Caco-2 (cell line): ENCODE measurements at regions of chr10 and their contacts with region 1.

Region 1: DNA sequence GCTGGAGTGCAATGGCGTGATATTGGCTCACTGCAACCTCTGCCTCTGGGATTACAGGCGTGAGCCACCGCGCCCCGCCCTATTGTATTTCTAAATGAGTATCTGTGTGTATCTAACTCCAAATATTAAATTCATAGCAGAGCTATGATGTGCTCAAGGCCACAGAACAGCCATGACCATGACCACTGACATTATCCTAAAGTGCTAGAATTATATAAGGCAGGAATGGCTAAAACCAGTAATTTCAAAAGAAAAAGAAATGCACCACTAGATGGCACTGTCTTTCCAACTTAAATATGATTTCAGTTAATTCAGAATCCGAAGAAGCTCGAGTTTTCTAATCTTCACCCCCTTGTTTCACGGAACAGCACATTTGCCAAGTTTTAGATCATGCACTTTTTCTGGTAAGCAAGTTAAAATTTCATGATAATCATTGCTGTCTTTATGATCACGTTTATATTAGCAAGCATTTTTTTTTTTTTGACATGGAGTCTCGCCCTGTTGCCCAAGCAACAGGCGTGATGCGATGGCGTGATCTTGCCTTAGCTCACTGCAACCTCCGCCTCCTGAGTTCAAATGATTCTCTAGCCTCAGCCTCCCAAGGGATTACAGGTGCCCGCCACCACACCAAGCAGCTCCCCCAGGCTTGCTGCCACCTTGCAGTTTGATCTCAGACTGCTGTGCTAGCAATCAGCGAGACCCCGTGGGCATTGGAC is 65.3 kb downstream of the OR13A1 start:
- DNase-seq: peak in 1 of 2 experiments; percentile 67
- H3K4me3 ChIP-seq: no peak overlapping the region
- H3K4me3 Mint-ChIP-seq: peak overlapping the region; percentile 48
- H3K27ac Mint-ChIP-seq: no peak overlapping the region
- H3K4me1 ChIP-seq: no peaks in the 10 kb centered on the region
- H3K4me1 Mint-ChIP-seq: no peaks in the 10 kb centered on the region
- H3K27me3 ChIP-seq: no peaks in the 10 kb centered on the region
- H3K27me3 Mint-ChIP-seq: peaks cover 25% of the 10 kb centered on the region
- CTCF ChIP-seq: peak; percentile 67 to 87

Region 2: GRCh38 chr10:44801383-44802327 is 448.5 kb before region 1 on chr10:
- CTCF ChIA-PET with region 1: no interaction called
- POLR2A ChIA-PET with region 1: no interaction called
- intact Hi-C with region 1: no loop called
- DNase-seq: no peak
- H3K4me3 ChIP-seq: no peak overlapping the region
- H3K4me3 Mint-ChIP-seq: no peak overlapping the region
- H3K27ac Mint-ChIP-seq: no peak overlapping the region
- H3K4me1 ChIP-seq: no peaks in the 10 kb centered on the region
- H3K4me1 Mint-ChIP-seq: no peaks in the 10 kb centered on the region
- H3K27me3 ChIP-seq: no peaks in the 10 kb centered on the region
- H3K27me3 Mint-ChIP-seq: peaks cover 31% of the 10 kb centered on the region
- CTCF ChIP-seq: no peak

Region 3: DNA sequence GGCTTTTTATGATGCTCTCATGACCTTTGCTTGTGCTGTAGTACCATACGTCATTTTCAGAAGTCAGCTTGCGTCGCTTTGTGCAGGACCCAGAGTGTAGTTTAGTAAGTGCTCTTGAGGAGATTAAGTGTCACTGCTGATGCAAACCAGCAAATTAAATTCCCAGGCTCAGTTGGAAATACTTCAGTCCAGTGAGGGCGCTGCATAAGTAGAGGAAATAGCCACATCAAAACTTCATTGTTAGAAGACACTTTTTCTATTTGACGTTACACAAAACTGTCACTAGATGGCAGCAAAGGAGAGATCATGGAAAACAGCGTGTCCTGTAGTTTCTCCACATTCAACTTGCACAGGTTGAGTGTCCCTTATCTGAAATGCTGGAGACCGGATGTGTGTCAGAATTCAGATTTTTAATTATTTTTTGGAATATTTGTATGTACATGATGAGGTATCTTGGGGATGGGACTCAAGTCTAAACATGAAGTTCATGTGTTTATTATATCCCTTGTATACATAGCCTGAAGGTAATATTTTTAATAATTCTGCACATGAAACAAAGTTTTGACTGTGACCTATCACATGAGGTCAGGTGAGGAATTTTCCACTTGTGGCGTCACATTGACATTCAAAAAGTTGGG is 241.5 kb before region 1 on chr10:
- CTCF ChIA-PET with region 1: interaction called, 5 read pairs
- POLR2A ChIA-PET with region 1: no interaction called
- intact Hi-C with region 1: loop called (anchors 2 kb)
- DNase-seq: peak in 1 of 2 experiments; percentile 83
- H3K4me3 ChIP-seq: no peak overlapping the region
- H3K4me3 Mint-ChIP-seq: no peak overlapping the region
- H3K27ac Mint-ChIP-seq: no peak overlapping the region
- H3K4me1 ChIP-seq: peaks cover 5% of the 10 kb centered on the region; the same call in 1 of the 2 replicates
- H3K4me1 Mint-ChIP-seq: peaks cover 2% of the 10 kb centered on the region
- H3K27me3 ChIP-seq: no peaks in the 10 kb centered on the region
- H3K27me3 Mint-ChIP-seq: no peaks in the 10 kb centered on the region
- CTCF ChIP-seq: peak; percentile 87 to 90

Region 4: GRCh38 chr10:45235798-45236231 is 14.3 kb before region 1 on chr10:
- CTCF ChIA-PET with region 1: interaction called, 6 read pairs
- POLR2A ChIA-PET with region 1: no interaction called
- intact Hi-C with region 1: loop called (anchors 1 kb)
- DNase-seq: no peak
- H3K4me3 ChIP-seq: no peak overlapping the region
- H3K4me3 Mint-ChIP-seq: no peak overlapping the region
- H3K27ac Mint-ChIP-seq: no peak overlapping the region
- H3K4me1 ChIP-seq: no peaks in the 10 kb centered on the region
- H3K4me1 Mint-ChIP-seq: no peaks in the 10 kb centered on the region
- H3K27me3 ChIP-seq: no peaks in the 10 kb centered on the region
- H3K27me3 Mint-ChIP-seq: peaks cover 11% of the 10 kb centered on the region
- CTCF ChIP-seq: no peak

Region 5: GRCh38 chr10:45286980-45287379 is 36.8 kb after region 1 on chr10:
- CTCF ChIA-PET with region 1: no interaction called
- POLR2A ChIA-PET with region 1: no interaction called
- intact Hi-C with region 1: no loop called
- DNase-seq: no peak
- H3K4me3 ChIP-seq: no peak overlapping the region
- H3K4me3 Mint-ChIP-seq: no peak overlapping the region
- H3K27ac Mint-ChIP-seq: no peak overlapping the region
- H3K4me1 ChIP-seq: no peaks in the 10 kb centered on the region
- H3K4me1 Mint-ChIP-seq: no peaks in the 10 kb centered on the region
- H3K27me3 ChIP-seq: no peaks in the 10 kb centered on the region
- H3K27me3 Mint-ChIP-seq: no peaks in the 10 kb centered on the region
- CTCF ChIP-seq: no peak

Region 6: GRCh38 chr10:45373576-45374349 is 123.6 kb after region 1 on chr10 and contains the start of gene ALOX5:
- CTCF ChIA-PET with region 1: interaction called, 5 read pairs
- POLR2A ChIA-PET with region 1: no interaction called
- intact Hi-C with region 1: loop called (anchors 5 kb)
- DNase-seq: peak; percentile 69 to 75
- H3K4me3 ChIP-seq: peak within 1 kb of the TSS; percentile 35
- H3K4me3 Mint-ChIP-seq: peak within 1 kb of the TSS; percentile 82
- H3K27ac Mint-ChIP-seq: no peak within 1 kb of the TSS
- H3K4me1 ChIP-seq: peaks cover 9% of the 10 kb centered on the region
- H3K4me1 Mint-ChIP-seq: no peaks in the 10 kb centered on the region
- H3K27me3 ChIP-seq: peaks cover 13% of the 10 kb centered on the region
- H3K27me3 Mint-ChIP-seq: peaks cover 36% of the 10 kb centered on the region
- CTCF ChIP-seq: no peak
- total RNA-seq, gene ALOX5: not detected in 2 replicates

Region 7: GRCh38 chr10:45442662-45443061 is 192.5 kb after region 1 on chr10:
- CTCF ChIA-PET with region 1: interaction called, 5 read pairs
- POLR2A ChIA-PET with region 1: no interaction called
- intact Hi-C with region 1: loop called (anchors 5 kb)
- DNase-seq: peak in 1 of 2 experiments; percentile 39
- H3K4me3 ChIP-seq: no peak overlapping the region
- H3K4me3 Mint-ChIP-seq: no peak overlapping the region
- H3K27ac Mint-ChIP-seq: no peak overlapping the region
- H3K4me1 ChIP-seq: no peaks in the 10 kb centered on the region
- H3K4me1 Mint-ChIP-seq: no peaks in the 10 kb centered on the region
- H3K27me3 ChIP-seq: no peaks in the 10 kb centered on the region; the same call in none of the 2 replicates
- H3K27me3 Mint-ChIP-seq: peaks cover 28% of the 10 kb centered on the region
- CTCF ChIP-seq: peak in 1 of 2 experiments; percentile 39

Region 8: GRCh38 chr10:45464958-45465567 is 214.9 kb after region 1 on chr10:
- CTCF ChIA-PET with region 1: interaction called, 12 read pairs
- POLR2A ChIA-PET with region 1: no interaction called
- intact Hi-C with region 1: loop called (anchors 5 kb)
- DNase-seq: peak; percentile 75 to 88
- H3K4me3 ChIP-seq: no peak overlapping the region
- H3K4me3 Mint-ChIP-seq: no peak overlapping the region
- H3K27ac Mint-ChIP-seq: no peak overlapping the region
- H3K4me1 ChIP-seq: 0 out of 2 replicates have a peak, but pooled peaks cover under 1% of the 10 kb centered on the region
- H3K4me1 Mint-ChIP-seq: no peaks in the 10 kb centered on the region
- H3K27me3 ChIP-seq: no peaks in the 10 kb centered on the region
- H3K27me3 Mint-ChIP-seq: peaks cover 3% of the 10 kb centered on the region
- CTCF ChIP-seq: peak; percentile 98 to 99